WTC11 (cell line): ENCODE measurements at regions of chr3 and their contacts with region 1.

Region 1: GRCh38 chr3:148727247-148727646 is 29.5 kb downstream of the AGTR1 start:
- DNase-seq: peak; percentile 56
- ATAC-seq: peak; percentile 98
- H3K4me3 Mint-ChIP-seq: no peak overlapping the region
- H3K27ac Mint-ChIP-seq: no peak overlapping the region
- H3K4me1 Mint-ChIP-seq: peaks cover 4% of the 10 kb centered on the region; the same call in 1 of the 2 replicates
- H3K27me3 Mint-ChIP-seq: no peaks in the 10 kb centered on the region
- CTCF ChIP-seq: peak; percentile 43; the same call in 1 of the 2 replicates

Region 2: GRCh38 chr3:148742103-148742502 is 14.9 kb after region 1 on chr3:
- CTCF ChIA-PET with region 1: no interaction called
- POLR2A ChIA-PET with region 1: no interaction called
- DNase-seq: no peak
- ATAC-seq: no peak
- H3K4me3 Mint-ChIP-seq: no peak overlapping the region
- H3K27ac Mint-ChIP-seq: no peak overlapping the region
- H3K4me1 Mint-ChIP-seq: no peaks in the 10 kb centered on the region
- H3K27me3 Mint-ChIP-seq: no peaks in the 10 kb centered on the region
- CTCF ChIP-seq: no peak

Region 3: GRCh38 chr3:148880681-148881080 is 153.4 kb after region 1 on chr3:
- CTCF ChIA-PET with region 1: interaction called, 23 read pairs
- POLR2A ChIA-PET with region 1: no interaction called
- DNase-seq: peak; percentile 19
- ATAC-seq: peak; percentile 97
- H3K4me3 Mint-ChIP-seq: no peak overlapping the region
- H3K27ac Mint-ChIP-seq: no peak overlapping the region; the same call in 1 of the 2 replicates
- H3K4me1 Mint-ChIP-seq: no peaks in the 10 kb centered on the region; the same call in 1 of the 2 replicates
- H3K27me3 Mint-ChIP-seq: no peaks in the 10 kb centered on the region
- CTCF ChIP-seq: peak; percentile 34; the same call in 1 of the 2 replicates

Region 4: DNA sequence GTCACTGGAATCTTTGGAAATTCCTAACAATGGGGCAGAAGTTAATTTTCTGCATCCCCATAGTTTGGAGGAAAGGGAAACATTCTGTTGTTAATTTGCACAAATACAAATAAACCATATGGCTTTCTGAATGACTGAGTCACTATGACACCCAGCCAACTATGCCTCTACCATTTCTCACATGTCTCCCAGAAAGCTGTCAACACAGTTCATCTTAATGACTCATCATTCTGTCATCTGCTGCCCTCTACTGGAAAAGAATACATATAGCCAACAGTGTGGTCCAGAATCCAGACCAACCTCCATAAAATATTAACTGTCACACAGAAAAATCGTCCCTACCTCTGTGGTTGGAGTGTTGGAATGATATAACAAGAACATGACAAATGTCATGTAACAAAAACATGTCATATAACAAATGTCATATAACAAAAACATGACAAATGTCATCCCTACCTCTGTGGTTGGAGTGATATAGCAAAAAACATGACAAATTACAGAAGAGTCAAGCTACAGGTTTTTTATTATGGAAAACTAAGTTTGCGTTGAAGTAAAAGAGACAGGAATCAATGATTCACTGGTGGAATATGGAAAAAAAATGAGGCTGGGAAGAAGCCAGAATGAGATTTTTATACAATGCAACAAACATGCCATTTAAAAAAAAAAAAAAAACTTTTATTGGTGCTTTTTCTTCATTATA is 216.4 kb after region 1 on chr3:
- CTCF ChIA-PET with region 1: interaction called, 14 read pairs
- POLR2A ChIA-PET with region 1: no interaction called
- DNase-seq: no peak
- ATAC-seq: peak; percentile 81
- H3K4me3 Mint-ChIP-seq: no peak overlapping the region
- H3K27ac Mint-ChIP-seq: no peak overlapping the region
- H3K4me1 Mint-ChIP-seq: no peaks in the 10 kb centered on the region
- H3K27me3 Mint-ChIP-seq: no peaks in the 10 kb centered on the region
- CTCF ChIP-seq: peak; percentile 46